Ascending aorta (tissue), 2 donors: ENCODE measurements at regions of chr16 and their contacts with region 1.

Region 1: GRCh38 chr16:2777231-2777902 is at the start of gene ELOB:
- DNase-seq: peak; percentile 57 to 92
- H3K4me3 ChIP-seq: peak within 1 kb of the TSS; percentile 91 to 100
- H3K27ac ChIP-seq: peak within 1 kb of the TSS; percentile 99 to 100
- H3K4me1 ChIP-seq: peaks cover 9 to 17% of the 10 kb centered on the region in 2 donors
- H3K27me3 ChIP-seq: no peaks in the 10 kb centered on the region
- CTCF ChIP-seq: no peak
- total RNA-seq, gene ELOB: 1,184 TPM

Region 2: GRCh38 chr16:2673066-2673999 is 104.0 kb before region 1 on chr16:
- intact Hi-C with region 1: loop called (anchors 5 kb)
- DNase-seq: peak; percentile 85 to 97
- H3K4me3 ChIP-seq: peak overlapping the region; percentile 67 to 83
- H3K27ac ChIP-seq: peak overlapping the region; percentile 66 to 75
- H3K4me1 ChIP-seq: peaks cover 0 to 14% of the 10 kb centered on the region in 2 donors
- H3K27me3 ChIP-seq: no peaks in the 10 kb centered on the region
- CTCF ChIP-seq: no peak

Region 3: GRCh38 chr16:2720719-2721633 is 56.4 kb before region 1 on chr16:
- intact Hi-C with region 1: loop called (anchors 1 kb)
- DNase-seq: peak; percentile 20 to 91
- H3K4me3 ChIP-seq: peak overlapping the region; percentile 79 to 80
- H3K27ac ChIP-seq: peak overlapping the region; percentile 57 to 75
- H3K4me1 ChIP-seq: peaks cover 0 to 8% of the 10 kb centered on the region in 2 donors
- H3K27me3 ChIP-seq: no peaks in the 10 kb centered on the region
- CTCF ChIP-seq: peak; percentile 54 to 67 (median 56)

Region 4: DNA sequence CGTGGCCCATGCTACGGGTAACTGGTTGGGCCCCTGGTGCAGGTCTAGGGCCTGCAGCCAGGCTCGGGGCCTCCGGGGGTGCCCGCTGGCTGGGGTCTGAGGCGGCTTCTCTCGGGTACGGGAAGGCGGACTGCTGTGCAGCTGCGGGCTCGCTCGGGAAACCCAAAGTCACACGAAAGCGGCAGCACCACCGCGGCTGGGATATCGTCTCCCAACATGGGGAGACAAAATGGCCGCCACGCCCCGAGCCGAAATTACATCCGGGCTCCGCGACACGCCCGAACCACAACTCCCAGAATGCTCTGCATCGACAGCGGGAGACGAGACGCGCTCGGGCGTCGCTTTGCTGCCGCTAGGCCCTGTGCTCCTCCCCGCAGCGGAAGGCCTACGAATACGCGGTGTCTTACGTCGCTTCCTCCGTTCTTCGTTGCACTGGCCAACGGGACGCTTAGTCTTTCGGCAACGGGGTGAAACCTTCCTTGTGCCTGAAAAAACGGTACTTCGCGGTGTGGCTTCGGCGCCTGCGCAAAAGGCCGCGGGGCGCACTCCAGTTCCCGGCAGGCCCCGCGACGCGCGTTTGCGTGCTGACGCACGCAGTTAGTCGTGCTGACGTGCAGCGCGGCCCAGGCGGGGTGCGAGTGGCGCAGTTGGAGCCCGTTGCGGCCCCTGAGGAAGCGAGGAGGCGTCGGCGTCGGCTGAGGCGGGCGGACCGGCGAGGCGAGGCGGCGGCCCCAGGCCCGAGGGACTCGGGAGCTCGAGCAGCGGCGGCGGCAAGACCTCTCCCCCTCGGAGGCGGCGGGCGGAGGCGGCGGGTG is 25.1 kb before region 1 on chr16 and contains the start of gene SRRM2:
- intact Hi-C with region 1: loop called (anchors 1 kb)
- DNase-seq: peak; percentile 67 to 97
- H3K4me3 ChIP-seq: peak within 1 kb of the TSS; percentile 86 to 96
- H3K27ac ChIP-seq: peak within 1 kb of the TSS; percentile 97 to 98
- H3K4me1 ChIP-seq: peaks cover 18 to 35% of the 10 kb centered on the region in 2 donors
- H3K27me3 ChIP-seq: no peaks in the 10 kb centered on the region
- CTCF ChIP-seq: no peak
- total RNA-seq, gene SRRM2: 359 TPM